SK-N-SH (cell line): ENCODE measurements at regions of chrX and their contacts with region 1.

Region 1: DNA sequence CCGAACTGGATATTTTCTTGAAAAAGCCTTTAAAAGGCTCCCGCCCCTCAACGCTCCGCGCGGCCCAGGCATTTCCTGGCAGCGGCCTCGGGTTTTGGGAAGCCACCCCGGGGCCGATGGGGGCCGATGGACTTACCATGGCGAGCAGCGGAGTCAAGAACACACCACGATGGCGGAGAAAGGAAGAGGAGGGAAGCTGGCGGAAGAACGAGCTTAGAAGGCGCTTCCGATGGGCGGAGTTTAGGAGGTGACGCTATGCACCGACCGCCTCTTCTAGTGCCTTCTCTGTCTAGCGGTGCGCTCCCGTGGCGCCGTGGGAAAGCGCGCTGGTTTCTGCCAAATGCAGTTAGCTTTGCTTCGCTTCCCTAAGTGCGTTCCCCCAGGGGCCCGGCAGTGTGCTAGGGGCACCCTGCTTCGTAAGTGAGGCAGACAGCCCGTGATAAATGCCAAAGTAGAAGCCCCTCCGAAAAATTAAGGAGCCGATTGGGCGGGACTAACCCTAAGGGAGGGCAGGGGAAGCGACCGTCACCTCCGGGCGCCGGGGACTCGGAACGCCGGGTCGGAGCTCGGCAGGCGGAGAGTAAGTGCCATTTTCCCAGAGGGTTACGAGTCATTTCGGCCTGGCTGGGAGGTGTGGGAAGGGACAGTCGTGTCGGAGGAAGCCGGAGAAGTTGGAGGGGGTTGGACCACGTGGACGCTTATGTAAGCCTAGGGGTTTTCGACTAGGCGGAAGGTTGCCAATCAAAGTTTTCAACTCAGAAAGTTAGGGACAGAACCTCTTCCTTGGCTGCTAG is at the start of gene RPL39:
- DNase-seq: peak; percentile 83
- H3K4me3 ChIP-seq: peak within 1 kb of the TSS; percentile 75 to 95
- H3K27ac ChIP-seq: peak within 1 kb of the TSS; percentile 91 to 98
- H3K4me1 ChIP-seq: peaks cover 3 to 8% of the 10 kb centered on the region in 2 experiments; a peak in 1 of 4 replicates
- H3K27me3 ChIP-seq: no peaks in the 10 kb centered on the region
- CTCF ChIP-seq: no peak
- EP300 ChIP-seq: peak in 1 of 2 experiments; percentile 33; a peak in 1 of 4 replicates
- RAD21 ChIP-seq: no peak
- polyA plus RNA-seq, gene RPL39: 4,443 and 5,368 TPM in 2 replicates

Region 2: DNA sequence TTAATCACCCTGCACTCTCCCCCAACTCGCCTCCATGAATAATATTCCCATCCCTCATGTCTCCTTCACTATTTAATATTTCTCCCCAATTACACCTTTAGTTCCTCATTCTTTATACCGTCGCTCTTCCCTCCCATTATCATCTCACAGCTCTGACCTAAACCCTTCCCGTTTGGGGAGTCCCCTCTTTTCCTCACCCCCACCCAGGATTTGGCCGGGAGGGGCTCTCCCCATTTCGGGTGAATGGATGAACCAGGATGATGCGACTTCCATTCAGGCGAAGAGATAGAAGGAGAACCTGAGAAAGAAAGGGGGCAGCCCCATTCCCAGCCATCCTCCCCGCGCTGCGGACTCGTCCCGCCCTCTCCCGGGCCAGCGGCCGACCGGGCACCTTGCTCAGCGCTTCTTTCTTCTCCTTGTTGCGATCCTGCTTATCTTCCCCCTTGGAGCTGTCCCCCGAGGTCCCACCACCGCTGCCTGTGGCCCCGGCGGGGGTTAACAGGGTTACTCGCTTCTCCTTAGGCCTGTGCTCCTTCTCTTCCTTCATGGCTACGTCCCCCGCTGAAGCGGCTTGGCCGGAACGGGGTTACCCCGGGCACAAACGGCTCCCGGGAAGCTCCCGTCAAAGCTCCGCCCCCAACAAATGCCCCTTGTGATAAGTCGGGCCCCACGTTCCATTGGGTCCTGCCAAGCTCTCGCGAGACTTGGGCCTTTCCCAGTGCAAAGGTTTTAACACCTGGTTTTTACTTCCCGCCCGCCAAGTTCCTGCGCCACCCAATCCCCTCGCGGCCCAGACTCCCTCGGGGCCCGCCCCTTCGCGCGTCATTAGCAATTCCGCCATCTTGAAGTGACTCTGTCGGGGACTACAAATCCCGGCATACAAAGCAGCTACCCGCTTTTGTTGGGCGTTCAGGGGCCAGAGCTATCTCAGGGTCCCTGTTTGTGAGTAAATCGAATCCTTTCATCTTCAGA is 61.0 kb after region 1 on chrX and contains the start of gene UPF3B:
- CTCF ChIA-PET with region 1: interaction called, 3 read pairs
- POLR2A ChIA-PET with region 1: interaction called, 37 read pairs
- DNase-seq: peak; percentile 95
- H3K4me3 ChIP-seq: peak within 1 kb of the TSS; percentile 74 to 96
- H3K27ac ChIP-seq: peak within 1 kb of the TSS; percentile 84 to 85
- H3K4me1 ChIP-seq: peaks cover 0 to 2% of the 10 kb centered on the region in 2 experiments; a peak in 1 of 4 replicates
- H3K27me3 ChIP-seq: peaks cover 20% of the 10 kb centered on the region
- CTCF ChIP-seq: no peak
- EP300 ChIP-seq: no peak; a peak in 1 of 4 replicates
- RAD21 ChIP-seq: no peak
- polyA plus RNA-seq, gene UPF3B: 8.5 and 8.9 TPM in 2 replicates

Region 3: DNA sequence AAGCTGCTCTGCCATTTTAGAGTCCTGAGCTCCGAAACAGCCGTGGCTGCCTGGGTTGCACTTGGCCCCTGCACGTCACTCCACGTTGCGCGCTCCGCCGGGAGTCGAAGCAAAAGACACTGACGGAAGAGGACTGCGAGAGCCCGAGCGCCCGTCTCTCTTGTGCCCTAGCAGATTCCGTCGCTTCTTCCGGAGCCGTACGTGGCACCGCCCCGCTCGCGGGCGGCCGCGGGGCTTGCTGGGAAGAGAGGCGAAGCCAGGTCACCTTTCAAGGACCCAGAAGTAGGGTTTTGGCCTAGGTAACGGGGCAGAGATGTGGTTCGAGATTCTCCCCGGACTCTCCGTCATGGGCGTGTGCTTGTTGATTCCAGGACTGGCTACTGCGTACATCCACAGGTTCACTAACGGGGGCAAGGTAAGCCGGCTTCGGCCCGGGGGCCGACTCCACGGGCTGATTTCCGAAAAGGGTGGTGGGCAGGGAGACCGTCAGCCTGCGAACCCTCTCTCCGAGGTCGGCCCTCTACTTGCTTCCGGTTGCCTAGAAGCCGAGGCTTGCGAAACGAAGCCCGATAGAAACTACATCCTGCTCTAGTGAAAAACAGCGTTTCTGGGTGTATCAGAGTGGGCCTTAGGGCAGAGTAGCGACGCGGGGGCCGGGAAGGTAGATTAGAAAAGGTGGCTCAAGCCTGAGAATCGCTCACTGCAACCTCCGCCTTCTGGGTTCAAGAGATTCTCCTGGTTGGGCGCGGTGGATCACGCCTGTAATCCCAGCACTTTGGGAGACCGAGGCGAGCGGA is 80.2 kb after region 1 on chrX and contains the starts of genes NDUFA1 and RNF113A:
- CTCF ChIA-PET with region 1: no interaction called
- POLR2A ChIA-PET with region 1: interaction called, 15 read pairs
- DNase-seq: peak; percentile 77
- H3K4me3 ChIP-seq: peak within 1 kb of the TSS; percentile 59 to 69
- H3K27ac ChIP-seq: peak within 1 kb of the TSS; percentile 84 to 87
- H3K4me1 ChIP-seq: no peaks in the 10 kb centered on the region; a peak in 1 of 4 replicates
- H3K27me3 ChIP-seq: peaks cover 13% of the 10 kb centered on the region; the same call in 1 of the 2 replicates
- CTCF ChIP-seq: no peak
- EP300 ChIP-seq: no peak
- RAD21 ChIP-seq: no peak
- polyA plus RNA-seq, gene NDUFA1: 96.5 and 101 TPM in 2 replicates
- polyA plus RNA-seq, gene RNF113A: 11.8 and 14.8 TPM in 2 replicates

Region 4: GRCh38 chrX:119887721-119888425 is 96.2 kb after region 1 on chrX:
- CTCF ChIA-PET with region 1: interaction called, 6 read pairs
- POLR2A ChIA-PET with region 1: interaction called, 11 read pairs
- DNase-seq: peak; percentile 86
- H3K4me3 ChIP-seq: peak overlapping the region; percentile 29 to 34; a peak in 3 of 4 replicates
- H3K27ac ChIP-seq: no peak overlapping the region
- H3K4me1 ChIP-seq: no peaks in the 10 kb centered on the region
- H3K27me3 ChIP-seq: peaks cover 14% of the 10 kb centered on the region; the same call in 1 of the 2 replicates
- CTCF ChIP-seq: peak; percentile 61
- EP300 ChIP-seq: no peak
- RAD21 ChIP-seq: peak; percentile 35

Region 5: GRCh38 chrX:119943185-119943988 is 151.8 kb after region 1 on chrX and contains the start of gene NKAP:
- CTCF ChIA-PET with region 1: no interaction called
- POLR2A ChIA-PET with region 1: no interaction called
- DNase-seq: peak; percentile 86
- H3K4me3 ChIP-seq: peak within 1 kb of the TSS; percentile 73 to 77
- H3K27ac ChIP-seq: peak within 1 kb of the TSS; percentile 79 to 87
- H3K4me1 ChIP-seq: peaks cover 0 to 7% of the 10 kb centered on the region in 2 experiments; a peak in 1 of 4 replicates
- H3K27me3 ChIP-seq: no peaks in the 10 kb centered on the region
- CTCF ChIP-seq: peak; percentile 29; the same call in 1 of the 2 replicates
- EP300 ChIP-seq: peak in 1 of 2 experiments; percentile 29; a peak in 1 of 4 replicates
- RAD21 ChIP-seq: no peak
- polyA plus RNA-seq, gene NKAP: 4.1 and 4.2 TPM in 2 replicates